Caco-2 (cell line): ENCODE measurements at regions of chr11 and their contacts with region 1.

Region 1: DNA sequence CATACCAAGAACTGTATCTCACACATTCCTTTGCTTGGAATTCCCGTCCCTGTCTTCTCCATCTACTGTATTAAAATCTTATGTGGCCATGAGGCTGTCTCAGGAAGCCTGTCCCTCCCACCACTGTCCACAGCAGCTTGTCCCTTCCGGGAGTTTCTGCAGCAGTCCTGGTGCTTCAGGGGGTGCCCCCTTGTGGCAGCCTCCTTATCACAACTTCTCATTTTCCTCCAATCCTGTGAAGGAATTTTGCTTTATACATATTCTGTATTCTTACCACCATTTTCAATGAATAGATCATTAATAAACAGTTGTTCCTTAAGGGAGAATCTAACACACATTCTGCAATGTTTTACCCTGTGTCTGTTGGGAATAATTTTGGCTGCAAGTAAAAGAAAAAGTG is 220.4 kb upstream of the RAG2 start:
- DNase-seq: peak in 1 of 2 experiments; percentile 25
- H3K4me3 ChIP-seq: no peak overlapping the region
- H3K4me3 Mint-ChIP-seq: no peak overlapping the region
- H3K27ac Mint-ChIP-seq: no peak overlapping the region
- H3K4me1 ChIP-seq: no peaks in the 10 kb centered on the region
- H3K4me1 Mint-ChIP-seq: no peaks in the 10 kb centered on the region
- H3K27me3 ChIP-seq: no peaks in the 10 kb centered on the region; the same call in 1 of the 2 replicates
- H3K27me3 Mint-ChIP-seq: peaks cover under 1% of the 10 kb centered on the region
- CTCF ChIP-seq: peak in 1 of 2 experiments; percentile 35

Region 2: DNA sequence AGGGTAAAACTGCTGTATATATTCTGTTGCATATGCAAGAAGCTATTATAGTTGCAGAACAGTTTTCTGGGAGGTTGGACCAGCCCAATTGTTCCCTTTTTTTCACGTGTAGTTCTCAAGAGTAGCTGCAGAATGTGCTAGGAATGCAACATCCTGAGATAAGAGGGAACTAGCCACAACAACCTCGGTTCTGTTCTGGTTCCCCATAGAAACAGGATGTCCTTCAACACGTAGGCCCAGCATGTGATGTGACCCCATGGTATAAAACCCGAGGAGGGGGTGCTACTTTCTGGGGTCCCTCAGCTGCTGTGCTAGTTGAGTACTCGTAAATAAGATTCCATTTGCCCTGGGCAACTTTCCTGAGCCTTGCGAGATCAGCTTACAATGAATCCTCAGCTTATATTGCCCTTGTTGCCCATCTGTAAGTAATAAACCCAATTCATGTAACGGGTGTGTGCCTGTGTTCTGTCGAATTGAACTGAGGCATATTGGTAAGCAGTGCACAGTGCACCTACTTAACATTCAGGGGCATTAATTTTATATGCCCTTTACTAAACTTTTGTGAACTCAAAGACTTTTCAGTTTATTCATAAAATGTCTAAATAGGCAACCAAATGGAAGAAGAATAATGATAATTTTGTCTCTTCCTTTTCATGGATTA is 285.3 kb before region 1 on chr11:
- CTCF ChIA-PET with region 1: no interaction called
- POLR2A ChIA-PET with region 1: no interaction called
- intact Hi-C with region 1: loop called (anchors 5 kb)
- DNase-seq: no peak
- H3K4me3 ChIP-seq: no peak overlapping the region
- H3K4me3 Mint-ChIP-seq: no peak overlapping the region
- H3K27ac Mint-ChIP-seq: no peak overlapping the region
- H3K4me1 ChIP-seq: no peaks in the 10 kb centered on the region
- H3K4me1 Mint-ChIP-seq: no peaks in the 10 kb centered on the region
- H3K27me3 ChIP-seq: no peaks in the 10 kb centered on the region
- H3K27me3 Mint-ChIP-seq: peaks cover 3% of the 10 kb centered on the region
- CTCF ChIP-seq: no peak

Region 3: GRCh38 chr11:36831440-36831839 is 13.0 kb after region 1 on chr11:
- CTCF ChIA-PET with region 1: no interaction called
- POLR2A ChIA-PET with region 1: no interaction called
- intact Hi-C with region 1: no loop called
- DNase-seq: no peak
- H3K4me3 ChIP-seq: no peak overlapping the region
- H3K4me3 Mint-ChIP-seq: no peak overlapping the region
- H3K27ac Mint-ChIP-seq: no peak overlapping the region
- H3K4me1 ChIP-seq: no peaks in the 10 kb centered on the region
- H3K4me1 Mint-ChIP-seq: no peaks in the 10 kb centered on the region
- H3K27me3 ChIP-seq: no peaks in the 10 kb centered on the region
- H3K27me3 Mint-ChIP-seq: no peaks in the 10 kb centered on the region
- CTCF ChIP-seq: no peak